GM10248 (cell line): ENCODE measurements at regions of chr3 and their contacts with region 1.

Region 1: DNA sequence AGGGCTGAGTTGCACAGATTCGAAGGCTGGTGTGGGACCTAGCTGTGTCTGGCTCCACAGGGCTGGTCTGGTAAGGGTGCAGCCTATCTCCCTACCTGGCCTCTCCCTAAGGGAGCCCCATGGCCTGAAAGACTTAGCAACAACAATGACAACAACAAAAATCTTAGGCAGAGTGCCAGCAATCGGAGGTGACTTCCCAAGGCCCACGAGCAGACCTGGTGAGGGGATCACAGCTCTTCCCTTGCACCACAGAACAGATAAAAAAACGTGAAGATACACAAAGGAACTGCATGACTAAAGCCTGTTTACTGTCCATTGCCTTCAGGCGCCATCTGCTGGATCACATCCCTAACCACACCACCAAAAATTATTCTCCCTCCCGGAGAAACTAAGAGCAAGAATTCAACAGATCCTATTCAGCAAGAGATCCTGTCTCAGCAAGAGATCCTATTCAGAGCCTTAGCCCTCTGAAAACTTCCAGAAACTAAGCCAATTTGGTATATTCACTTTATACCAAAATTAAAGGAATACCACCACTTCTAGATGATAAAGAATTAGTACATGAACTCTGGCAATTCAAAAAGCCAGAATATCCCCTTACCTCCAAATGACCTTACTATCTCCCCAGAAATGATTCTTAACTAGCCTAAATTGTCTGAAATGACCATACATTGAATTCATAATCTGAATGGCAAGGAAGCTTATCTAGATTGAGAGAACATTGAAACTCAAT is 24.1 kb upstream of the OR5K4 start:
- DNase-seq: peak; percentile 35
- CTCF ChIP-seq: peak; percentile 74

Region 2: GRCh38 chr3:98039322-98040024 is 290.1 kb before region 1 on chr3:
- CTCF ChIA-PET with region 1: interaction called, 70 read pairs
- POLR2A ChIA-PET with region 1: no interaction called
- DNase-seq: peak; percentile 40
- CTCF ChIP-seq: peak; percentile 84

Region 3: GRCh38 chr3:98343647-98344507 is 14.3 kb after region 1 on chr3:
- CTCF ChIA-PET with region 1: interaction called, 31 read pairs
- POLR2A ChIA-PET with region 1: no interaction called
- DNase-seq: peak; percentile 51
- CTCF ChIP-seq: peak; percentile 47

Region 4: DNA sequence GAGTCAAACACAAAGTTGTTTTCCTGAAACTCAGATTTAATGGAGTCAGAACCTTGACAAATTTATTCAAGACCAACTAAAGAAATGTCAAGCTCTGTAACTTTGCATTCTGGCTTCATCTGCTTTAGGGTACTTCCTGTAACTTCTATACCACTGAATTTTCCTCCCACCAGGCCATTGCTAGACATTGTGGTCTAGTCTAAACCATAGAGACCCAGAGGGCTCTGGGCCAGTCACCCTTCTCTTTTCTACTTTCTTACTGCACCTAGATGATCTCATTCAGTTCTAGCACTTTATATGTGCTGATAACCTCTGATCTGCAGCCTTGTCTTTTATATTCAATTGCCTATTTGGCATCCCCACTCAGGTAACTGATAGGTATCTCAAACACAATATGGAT is 130.7 kb after region 1 on chr3:
- CTCF ChIA-PET with region 1: no interaction called
- POLR2A ChIA-PET with region 1: no interaction called
- DNase-seq: no peak
- CTCF ChIP-seq: no peak